ENCODE measurements at regions of chr14 and their contacts with region 1.

Region 1: DNA sequence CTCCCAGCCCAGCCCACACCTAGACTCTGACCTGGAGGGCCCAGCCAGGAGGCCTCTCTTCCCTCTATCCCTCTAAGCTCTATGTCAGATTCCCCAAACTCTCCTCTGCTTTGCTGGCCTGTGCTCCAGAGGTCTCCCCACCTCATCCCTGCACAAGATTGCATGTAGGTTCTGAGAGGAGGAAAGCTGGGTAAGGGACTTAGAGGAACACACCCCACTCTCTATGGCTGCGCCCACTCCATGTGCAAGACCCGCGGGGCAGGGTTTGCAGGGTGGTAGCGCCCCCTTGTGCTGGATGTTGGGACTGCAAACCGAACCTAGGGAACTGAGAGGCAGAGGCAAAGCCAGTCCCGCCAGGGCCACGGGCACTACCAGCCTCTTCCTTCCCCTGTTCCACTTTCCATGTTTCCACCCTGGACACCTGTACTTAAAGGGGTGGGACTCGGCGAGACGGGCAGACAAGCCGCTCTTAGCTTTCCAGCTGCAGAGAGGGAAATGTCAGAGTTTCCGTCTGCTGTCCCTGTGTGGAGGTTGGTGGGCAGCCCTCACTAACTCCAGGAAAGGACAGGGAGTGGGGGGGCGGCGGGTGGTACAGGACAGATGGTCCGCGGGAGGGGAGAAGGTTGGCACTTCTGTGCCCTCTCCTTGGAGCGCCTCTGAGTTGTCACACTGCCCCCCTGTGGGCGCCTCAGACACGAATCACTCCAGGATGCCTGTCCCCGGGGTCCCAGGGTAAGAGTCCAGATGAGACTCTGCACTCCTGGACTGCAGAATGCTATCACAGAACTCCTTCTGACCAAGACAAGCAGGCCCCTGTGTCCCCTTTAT is 16.8 kb downstream of the MMP14 start:
- DNase-seq: peak; percentile 81 to 95 (median 89)
- H3K4me3 ChIP-seq: peak overlapping the region in 2 of 4 donors; percentile 35 to 47
- H3K27ac ChIP-seq: peak overlapping the region in 1 of 5 donors; percentile 10
- H3K4me1 ChIP-seq: peaks cover 5 to 38% of the 10 kb centered on the region in 2 donors
- H3K27me3 ChIP-seq: no peaks in the 10 kb centered on the region
- CTCF ChIP-seq: peak; percentile 89 to 99 (median 94)
- POLR2A ChIP-seq: no peak

Region 2: DNA sequence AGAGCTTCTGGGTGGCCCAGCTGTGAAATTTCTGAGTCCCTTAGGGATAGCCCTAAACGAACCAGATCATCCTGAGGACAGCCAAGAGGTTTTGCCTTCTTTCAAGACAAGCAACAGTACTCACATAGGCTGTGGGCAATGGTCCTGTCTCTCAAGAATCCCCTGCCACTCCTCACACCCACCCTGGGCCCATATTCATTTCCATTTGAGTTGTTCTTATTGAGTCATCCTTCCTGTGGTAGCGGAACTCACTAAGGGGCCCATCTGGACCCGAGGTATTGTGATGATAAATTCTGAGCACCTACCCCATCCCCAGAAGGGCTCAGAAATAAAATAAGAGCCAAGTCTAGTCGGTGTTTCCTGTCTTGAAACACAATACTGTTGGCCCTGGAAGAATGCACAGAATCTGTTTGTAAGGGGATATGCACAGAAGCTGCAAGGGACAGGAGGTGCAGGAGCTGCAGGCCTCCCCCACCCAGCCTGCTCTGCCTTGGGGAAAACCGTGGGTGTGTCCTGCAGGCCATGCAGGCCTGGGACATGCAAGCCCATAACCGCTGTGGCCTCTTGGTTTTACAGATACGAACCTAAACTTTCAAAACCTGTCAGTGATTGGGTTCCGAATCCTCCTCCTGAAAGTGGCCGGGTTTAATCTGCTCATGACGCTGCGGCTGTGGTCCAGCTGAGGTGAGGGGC is 303.0 kb before region 1 on chr14:
- intact Hi-C with region 1: loop called in 1 of 2 experiments (anchors 5 kb)
- DNase-seq: no peak
- H3K4me3 ChIP-seq: no peak overlapping the region
- H3K27ac ChIP-seq: no peak overlapping the region
- H3K4me1 ChIP-seq: peaks cover 8 to 23% of the 10 kb centered on the region in 2 donors
- H3K27me3 ChIP-seq: no peaks in the 10 kb centered on the region
- CTCF ChIP-seq: no peak
- POLR2A ChIP-seq: no peak

Region 3: GRCh38 chr14:22778084-22778483 is 75.1 kb before region 1 on chr14:
- intact Hi-C with region 1: loop called in 1 of 2 experiments (anchors 10 kb)
- DNase-seq: no peak
- H3K4me3 ChIP-seq: no peak overlapping the region
- H3K27ac ChIP-seq: no peak overlapping the region
- H3K4me1 ChIP-seq: peaks cover 0 to 34% of the 10 kb centered on the region in 2 donors
- H3K27me3 ChIP-seq: no peaks in the 10 kb centered on the region
- CTCF ChIP-seq: no peak
- POLR2A ChIP-seq: no peak

Region 4: DNA sequence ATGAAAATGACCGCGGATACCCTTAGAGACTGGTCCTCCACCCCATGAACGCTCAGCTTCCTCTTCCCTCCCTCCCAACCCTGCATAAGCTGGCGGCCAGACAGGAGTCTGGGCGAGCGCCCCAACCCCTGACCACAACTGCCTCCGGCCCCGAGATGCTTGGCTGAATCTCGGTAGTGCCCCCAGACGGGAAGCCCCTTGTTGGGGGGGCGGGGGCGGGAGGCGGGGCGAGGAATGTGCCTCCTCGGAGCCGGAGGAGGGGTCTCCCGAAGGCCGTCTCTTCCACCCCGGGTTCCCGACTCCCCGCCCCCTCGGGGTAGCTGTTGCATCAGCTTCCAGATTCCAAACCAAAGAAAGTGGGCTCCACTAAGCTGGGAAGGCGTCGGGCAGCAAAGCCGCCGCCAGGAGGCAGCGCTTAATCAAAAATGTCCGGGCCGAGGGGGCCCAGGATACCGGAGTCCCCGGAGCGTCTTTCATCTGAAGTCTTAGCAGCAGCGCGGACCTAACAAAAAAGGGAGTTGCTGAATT is 30.5 kb before region 1 on chr14:
- intact Hi-C with region 1: loop called (anchors 2 to 5 kb)
- DNase-seq: peak; percentile 66 to 81 (median 71)
- H3K4me3 ChIP-seq: peak overlapping the region in 1 of 4 donors; percentile 42
- H3K27ac ChIP-seq: peak overlapping the region in 1 of 5 donors; percentile 18
- H3K4me1 ChIP-seq: peaks cover 0 to 26% of the 10 kb centered on the region in 2 donors
- H3K27me3 ChIP-seq: no peaks in the 10 kb centered on the region
- CTCF ChIP-seq: peak; percentile 59 to 80 (median 76)
- POLR2A ChIP-seq: no peak

Region 5: DNA sequence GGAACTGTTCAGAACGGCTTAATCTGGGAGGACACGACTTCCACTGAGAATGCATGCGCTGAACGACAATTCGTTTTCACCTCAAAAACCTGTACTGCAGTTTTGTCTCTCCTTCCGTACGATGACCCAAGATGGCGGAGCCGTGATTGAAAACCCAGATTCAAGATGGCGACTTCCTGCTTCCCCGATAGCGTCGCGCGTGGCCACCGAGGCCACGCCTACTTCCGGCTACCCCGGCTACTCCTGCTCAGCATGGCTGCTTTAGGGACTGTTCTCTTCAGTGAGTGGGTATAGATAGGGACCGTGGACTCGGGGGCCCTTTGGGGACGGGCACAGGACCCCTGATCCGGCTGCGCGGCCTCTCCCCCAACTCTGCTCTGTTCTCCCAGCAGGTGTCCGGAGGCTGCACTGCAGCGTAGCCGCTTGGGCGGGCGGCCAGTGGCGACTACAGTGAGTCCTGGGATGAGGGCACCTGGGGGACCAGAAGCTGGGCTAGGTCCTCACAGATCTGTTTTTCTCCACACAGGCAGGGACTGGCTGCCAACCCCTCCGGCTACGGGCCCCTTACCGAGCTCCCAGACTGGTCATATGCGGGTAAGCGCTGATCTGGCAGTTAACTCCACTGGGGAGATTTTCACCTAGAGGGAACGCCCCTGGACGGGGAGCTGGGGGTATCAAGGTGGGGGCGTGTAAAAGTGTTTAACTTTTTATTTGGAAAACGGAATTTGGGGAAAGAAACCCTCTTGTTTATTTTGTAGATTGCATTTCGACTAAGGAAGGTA is 23.3 kb before region 1 on chr14 and contains the start of gene MRPL52:
- intact Hi-C with region 1: loop called in 1 of 2 experiments (anchors 2 kb)
- DNase-seq: peak; percentile 85 to 94 (median 91)
- H3K4me3 ChIP-seq: peak within 1 kb of the TSS in 3 of 4 donors; percentile 40 to 92 (median 88)
- H3K27ac ChIP-seq: peak within 1 kb of the TSS in 4 of 5 donors; percentile 34 to 85 (median 57)
- H3K4me1 ChIP-seq: peaks cover 8 to 10% of the 10 kb centered on the region in 2 donors
- H3K27me3 ChIP-seq: no peaks in the 10 kb centered on the region
- CTCF ChIP-seq: peak in 1 of 6 experiments; percentile 10
- POLR2A ChIP-seq: no peak
- total RNA-seq, gene MRPL52: 58.3 to 390 (median 111) TPM

Region 6: GRCh38 chr14:22986508-22987054 is 133.4 kb after region 1 on chr14:
- intact Hi-C with region 1: no loop called
- DNase-seq: peak; percentile 84 to 98 (median 93)
- H3K4me3 ChIP-seq: no peak overlapping the region
- H3K27ac ChIP-seq: no peak overlapping the region
- H3K4me1 ChIP-seq: peaks cover 6 to 15% of the 10 kb centered on the region in 2 donors
- H3K27me3 ChIP-seq: no peaks in the 10 kb centered on the region
- CTCF ChIP-seq: peak; percentile 84 to 96 (median 93)
- POLR2A ChIP-seq: no peak